Endothelial cell of umbilical vein (primary cell): ENCODE measurements at regions of chr14 and their contacts with region 1.

Region 1: GRCh38 chr14:55136885-55137786 is 8.1 kb downstream of the LGALS3 start:
- DNase-seq: peak; percentile 85
- H3K4me3 ChIP-seq: no peak overlapping the region
- H3K27ac ChIP-seq: peak overlapping the region; percentile 37
- H3K4me1 ChIP-seq: peaks cover 13% of the 10 kb centered on the region
- H3K27me3 ChIP-seq: no peaks in the 10 kb centered on the region
- CTCF ChIP-seq: no peak
- POLR2A ChIP-seq: no peak

Region 2: GRCh38 chr14:55085060-55085660 is 52.0 kb before region 1 on chr14:
- CTCF ChIA-PET with region 1: interaction called, 34 read pairs
- POLR2A ChIA-PET with region 1: no interaction called
- dilution Hi-C with region 1: no loop called
- intact Hi-C with region 1: no loop called
- DNase-seq: no peak
- H3K4me3 ChIP-seq: no peak overlapping the region
- H3K27ac ChIP-seq: no peak overlapping the region
- H3K4me1 ChIP-seq: no peaks in the 10 kb centered on the region
- H3K27me3 ChIP-seq: peaks cover 0 to 3% of the 10 kb centered on the region in 2 experiments
- CTCF ChIP-seq: no peak
- POLR2A ChIP-seq: no peak